Endothelial cell of umbilical vein (primary cell): ENCODE measurements at regions of chr3 and their contacts with region 1.

Region 1: DNA sequence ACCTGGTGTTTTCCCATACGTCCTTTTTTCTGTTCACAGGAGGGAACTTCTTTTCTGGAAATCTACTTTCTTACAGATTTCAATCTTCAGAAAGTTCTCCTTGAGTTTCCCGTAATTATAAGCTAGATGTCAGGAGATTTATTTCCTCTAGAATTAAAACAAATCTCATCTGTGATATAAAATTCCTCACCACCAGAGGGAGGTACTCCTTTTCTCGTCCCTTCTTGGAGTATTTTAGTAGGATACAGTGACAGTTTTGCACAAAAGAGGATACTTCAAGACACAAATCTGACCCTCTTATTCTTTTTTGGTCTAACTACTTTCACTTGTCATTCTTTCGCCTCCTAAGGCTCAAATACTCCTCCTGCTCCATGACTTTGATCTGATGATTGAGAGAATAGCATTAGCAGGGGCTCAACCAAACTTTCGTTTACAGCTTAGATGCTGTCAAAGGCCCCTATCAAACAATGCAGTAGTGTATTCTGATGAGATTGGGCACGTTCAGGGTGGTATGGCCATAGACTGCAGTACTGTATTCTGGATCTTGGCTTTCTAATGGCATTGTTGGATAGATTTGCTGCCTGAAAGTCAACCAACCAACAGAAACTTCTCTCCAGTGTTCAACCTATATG is 38.0 kb downstream of the TMEM41A start:
- DNase-seq: peak; percentile 37
- H3K4me3 ChIP-seq: no peak overlapping the region
- H3K27ac ChIP-seq: no peak overlapping the region
- H3K4me1 ChIP-seq: no peaks in the 10 kb centered on the region
- H3K27me3 ChIP-seq: no peaks in the 10 kb centered on the region
- CTCF ChIP-seq: no peak
- POLR2A ChIP-seq: no peak

Region 2: DNA sequence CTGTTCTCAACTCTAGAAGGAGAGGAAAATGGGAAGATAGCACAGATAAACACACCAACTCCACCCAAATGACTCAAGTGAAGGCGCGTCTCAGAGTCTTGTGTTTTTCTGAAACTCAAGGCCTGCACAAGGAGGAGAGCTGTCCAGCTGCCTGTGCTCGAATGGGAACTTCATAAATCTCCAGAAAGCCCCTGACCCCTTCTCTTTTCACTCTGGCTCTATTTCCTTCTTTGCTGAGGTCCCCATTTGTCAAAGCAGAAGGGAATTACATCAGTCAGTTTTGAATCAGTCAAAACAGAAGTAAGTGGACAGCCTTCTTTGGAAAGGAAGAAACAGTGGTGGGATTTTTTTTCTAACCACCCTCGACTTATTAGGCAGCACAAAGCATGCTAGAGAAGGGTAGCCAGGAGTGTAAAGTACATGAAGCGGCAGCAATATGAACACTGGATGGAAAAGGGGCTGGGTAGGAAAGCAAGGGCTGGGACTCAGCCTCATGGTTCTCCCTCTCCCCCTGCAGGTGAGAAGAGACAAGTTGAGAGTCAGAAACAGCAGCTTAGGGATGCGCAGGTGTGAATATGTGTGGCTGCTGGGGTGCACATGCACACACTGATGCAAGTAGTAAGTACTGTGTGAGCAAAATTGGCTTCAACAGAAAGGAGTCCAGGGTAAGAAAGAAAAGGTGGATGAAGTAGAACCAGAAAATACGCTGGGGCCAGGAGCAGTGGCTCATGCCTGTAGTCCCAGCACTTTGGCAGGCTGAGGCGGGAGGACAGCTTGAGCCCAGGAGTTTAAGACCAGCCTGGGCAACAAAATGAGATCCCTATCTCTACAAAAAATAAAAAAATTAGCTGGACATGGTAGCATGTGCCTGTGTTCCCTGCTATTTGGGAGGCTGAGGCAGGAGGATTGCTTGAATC is 712.4 kb before region 1 on chr3:
- CTCF ChIA-PET with region 1: no interaction called
- POLR2A ChIA-PET with region 1: no interaction called
- dilution Hi-C with region 1: no loop called
- intact Hi-C with region 1: no loop called
- DNase-seq: no peak
- H3K4me3 ChIP-seq: no peak overlapping the region
- H3K27ac ChIP-seq: no peak overlapping the region
- H3K4me1 ChIP-seq: no peaks in the 10 kb centered on the region
- H3K27me3 ChIP-seq: peaks cover 4 to 6% of the 10 kb centered on the region in 2 experiments
- CTCF ChIP-seq: no peak
- POLR2A ChIP-seq: no peak

Region 3: GRCh38 chr3:185416513-185416912 is 44.3 kb before region 1 on chr3:
- CTCF ChIA-PET with region 1: no interaction called
- POLR2A ChIA-PET with region 1: no interaction called
- dilution Hi-C with region 1: no loop called
- intact Hi-C with region 1: no loop called
- DNase-seq: no peak
- H3K4me3 ChIP-seq: no peak overlapping the region
- H3K27ac ChIP-seq: no peak overlapping the region
- H3K4me1 ChIP-seq: no peaks in the 10 kb centered on the region
- H3K27me3 ChIP-seq: no peaks in the 10 kb centered on the region
- CTCF ChIP-seq: no peak
- POLR2A ChIP-seq: no peak

Region 4: GRCh38 chr3:185498503-185499396 is 37.9 kb after region 1 on chr3 and contains the start of gene TMEM41A:
- CTCF ChIA-PET with region 1: interaction called, 8 read pairs
- POLR2A ChIA-PET with region 1: no interaction called
- dilution Hi-C with region 1: no loop called
- intact Hi-C with region 1: loop called (anchors 2 kb)
- DNase-seq: peak; percentile 90
- H3K4me3 ChIP-seq: peak within 1 kb of the TSS; percentile 55 to 93 (median 77)
- H3K27ac ChIP-seq: peak within 1 kb of the TSS; percentile 14
- H3K4me1 ChIP-seq: peaks cover 5% of the 10 kb centered on the region
- H3K27me3 ChIP-seq: peaks cover 2 to 8% of the 10 kb centered on the region in 2 experiments
- CTCF ChIP-seq: no peak
- POLR2A ChIP-seq: peak; percentile 90
- total RNA-seq, gene TMEM41A: 16.0 and 16.8 TPM in 2 replicates

Region 5: DNA sequence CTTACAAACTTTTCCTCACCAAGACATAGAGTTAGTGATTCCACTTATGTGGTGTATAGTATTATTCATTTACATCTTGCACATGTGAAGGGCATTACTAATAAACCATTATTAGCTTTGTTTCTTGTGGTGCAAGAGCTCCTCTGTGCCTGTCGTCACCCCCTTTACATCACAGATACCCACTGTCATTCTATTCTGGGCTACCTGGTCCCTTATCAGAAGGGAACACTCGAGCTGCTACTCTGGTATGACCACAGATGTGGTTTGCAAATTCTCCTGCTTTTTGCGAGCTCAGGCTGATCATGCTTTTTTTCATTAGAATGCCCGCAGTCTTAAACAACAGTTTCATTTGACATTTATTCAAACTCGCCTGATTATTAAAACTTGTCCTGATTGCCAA is 111.3 kb after region 1 on chr3:
- CTCF ChIA-PET with region 1: interaction called, 38 read pairs
- POLR2A ChIA-PET with region 1: no interaction called
- dilution Hi-C with region 1: no loop called
- intact Hi-C with region 1: no loop called
- DNase-seq: no peak
- H3K4me3 ChIP-seq: no peak overlapping the region
- H3K27ac ChIP-seq: no peak overlapping the region
- H3K4me1 ChIP-seq: no peaks in the 10 kb centered on the region
- H3K27me3 ChIP-seq: no peaks in the 10 kb centered on the region
- CTCF ChIP-seq: no peak
- POLR2A ChIP-seq: no peak